Activated B cell treated with CpG ODN at 0.5 μM for 24 hours (primary cell): ENCODE measurements at regions of chr6 and their contacts with region 1.

Region 1: DNA sequence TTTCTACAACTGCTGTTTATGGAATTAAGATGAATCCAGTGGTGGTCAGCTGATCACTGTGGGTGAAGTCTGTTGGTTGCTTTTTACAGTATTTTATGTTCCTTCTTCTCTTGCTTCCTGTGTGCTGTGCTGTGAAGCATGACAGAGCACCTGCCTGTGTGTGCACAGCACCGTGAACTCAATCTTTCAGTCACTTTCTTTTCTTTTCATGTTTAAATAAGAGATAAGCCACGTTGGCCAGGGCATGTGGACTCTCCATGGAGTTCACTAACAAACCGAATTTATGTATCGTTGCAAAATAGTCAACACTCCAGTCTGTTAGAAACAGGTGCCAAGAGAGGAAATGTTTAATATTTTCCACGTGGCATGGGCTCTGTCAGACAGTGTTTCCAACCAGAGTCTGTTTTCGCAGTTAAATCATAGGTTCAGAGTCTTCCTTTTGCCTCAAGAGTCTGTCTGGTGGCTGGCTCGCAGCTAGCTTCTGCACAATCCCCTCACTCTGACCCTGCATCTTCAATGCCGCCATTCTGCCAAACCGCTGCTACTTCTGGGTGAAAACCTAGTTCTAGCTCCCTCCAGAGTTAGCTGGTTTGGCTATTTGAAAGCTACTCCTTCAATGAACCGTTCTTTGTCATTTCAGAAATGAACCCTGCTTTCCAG is 73.2 kb downstream of the QRSL1 start:
- DNase-seq: peak; percentile 30
- ATAC-seq: peak; percentile 92
- H3K4me3 Mint-ChIP-seq: peak overlapping the region; percentile 81
- H3K27ac Mint-ChIP-seq: peak overlapping the region; percentile 98
- H3K4me1 Mint-ChIP-seq: peaks cover 91% of the 10 kb centered on the region
- H3K27me3 Mint-ChIP-seq: no peaks in the 10 kb centered on the region
- CTCF ChIP-seq: no peak

Region 2: DNA sequence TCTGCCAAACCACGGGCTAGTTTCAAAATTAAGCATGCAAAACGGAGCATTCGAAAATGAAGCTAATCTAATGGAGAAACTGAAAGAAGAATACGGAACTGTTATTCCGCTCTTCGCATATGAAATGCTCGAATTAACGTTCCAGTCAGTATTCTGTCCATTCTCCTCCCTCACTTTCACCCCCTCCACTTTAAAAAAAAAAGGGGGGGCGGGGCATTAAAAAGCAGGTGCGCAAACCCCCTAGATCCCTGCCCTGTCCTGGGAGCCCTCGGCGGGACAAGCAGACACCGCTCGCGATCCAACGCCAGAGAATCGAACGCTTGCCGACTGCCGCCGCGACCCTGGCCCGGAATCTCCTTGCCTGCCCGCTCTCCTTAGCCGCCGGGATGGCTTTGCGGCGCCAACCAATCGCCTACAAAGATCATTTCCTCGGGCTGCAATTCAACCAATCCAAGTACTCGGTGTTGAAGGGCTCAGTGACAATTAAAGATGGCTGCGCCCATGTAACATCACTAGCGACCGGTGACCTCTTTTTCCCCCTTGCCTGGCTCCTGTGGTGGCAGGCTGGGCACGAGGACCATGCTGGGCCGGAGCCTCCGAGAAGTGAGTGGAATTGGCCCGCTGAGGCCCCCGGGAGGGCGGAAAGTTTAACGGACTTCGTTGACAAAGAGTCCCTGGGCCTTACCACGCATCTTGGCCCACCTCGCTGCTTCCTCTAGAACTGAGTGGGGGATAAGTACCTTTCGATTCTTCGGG is 73.3 kb before region 1 on chr6 and contains the starts of genes QRSL1 and RTN4IP1:
- CTCF ChIA-PET with region 1: interaction called, 3 read pairs
- POLR2A ChIA-PET with region 1: interaction called, 3 read pairs
- intact Hi-C with region 1: loop called (anchors 1 kb)
- DNase-seq: peak; percentile 74
- ATAC-seq: peak; percentile 84
- H3K4me3 Mint-ChIP-seq: peak within 1 kb of the TSS; percentile 93
- H3K27ac Mint-ChIP-seq: peak within 1 kb of the TSS; percentile 96
- H3K4me1 Mint-ChIP-seq: peaks cover 72% of the 10 kb centered on the region
- H3K27me3 Mint-ChIP-seq: no peaks in the 10 kb centered on the region
- CTCF ChIP-seq: no peak
- total RNA-seq, gene QRSL1: 28.4 and 31.1 TPM in 2 replicates
- total RNA-seq, gene RTN4IP1: 9.9 and 11.2 TPM in 2 replicates

Region 3: DNA sequence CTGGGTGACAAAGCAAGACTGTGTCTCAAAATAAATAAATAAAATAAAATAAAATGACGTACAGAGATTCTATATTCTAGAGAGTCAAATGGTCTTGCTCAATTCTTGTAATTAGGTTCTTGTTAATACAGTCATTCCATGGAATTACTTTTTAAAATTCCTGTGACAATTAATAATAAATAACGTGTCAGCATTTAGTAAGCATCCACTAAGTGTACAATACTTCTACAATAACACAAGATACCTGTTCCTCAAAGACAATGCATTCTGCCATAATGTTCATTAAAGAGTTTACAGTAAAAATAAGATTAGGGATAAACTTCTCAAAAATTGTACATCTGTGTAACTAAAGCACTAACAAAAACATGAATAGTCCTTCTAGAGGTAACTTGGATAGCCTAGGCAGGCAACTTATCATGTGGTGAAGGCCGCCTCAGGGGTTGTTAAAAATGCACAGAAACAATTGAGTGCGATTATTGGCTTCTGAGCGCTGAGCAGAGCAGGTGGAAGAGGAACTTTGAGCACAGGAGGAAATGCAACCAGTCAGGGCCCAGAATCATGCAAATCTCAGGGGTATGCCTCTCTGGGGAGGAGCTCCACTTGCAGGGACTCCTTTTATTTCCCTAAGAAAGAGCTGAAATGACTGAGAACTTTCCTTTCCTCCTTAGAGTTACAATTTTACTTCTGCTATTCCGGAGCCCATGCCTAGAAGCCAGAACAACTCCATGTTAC is 36.1 kb before region 1 on chr6:
- CTCF ChIA-PET with region 1: no interaction called
- POLR2A ChIA-PET with region 1: interaction called, 3 read pairs
- intact Hi-C with region 1: loop called (anchors 1 kb)
- DNase-seq: peak; percentile 49
- ATAC-seq: peak; percentile 99
- H3K4me3 Mint-ChIP-seq: peak overlapping the region; percentile 66
- H3K27ac Mint-ChIP-seq: peak overlapping the region; percentile 87
- H3K4me1 Mint-ChIP-seq: peaks cover 66% of the 10 kb centered on the region
- H3K27me3 Mint-ChIP-seq: no peaks in the 10 kb centered on the region
- CTCF ChIP-seq: no peak

Region 4: DNA sequence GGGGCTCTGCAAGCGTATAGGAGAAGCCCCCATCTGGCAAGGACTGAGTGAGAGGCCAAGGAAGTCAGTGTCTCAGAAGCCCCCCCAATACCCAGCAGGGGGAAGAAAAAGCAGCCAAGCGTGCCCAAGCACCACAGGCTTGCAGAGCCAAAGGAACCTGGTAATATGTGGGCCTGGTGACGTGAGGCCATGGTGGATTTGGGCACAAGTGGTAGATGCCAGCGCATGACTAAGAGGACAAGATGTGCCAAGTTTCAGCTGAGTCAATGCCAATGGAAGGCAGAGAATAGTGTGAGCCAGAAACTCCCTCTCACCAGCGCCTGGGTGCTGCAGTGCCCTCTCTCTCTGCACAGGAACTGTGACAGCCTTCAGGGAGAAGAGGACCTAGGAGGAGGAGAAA is 36.8 kb after region 1 on chr6:
- CTCF ChIA-PET with region 1: no interaction called
- POLR2A ChIA-PET with region 1: no interaction called
- intact Hi-C with region 1: loop called (anchors 5 kb)
- DNase-seq: no peak
- ATAC-seq: peak; percentile 50
- H3K4me3 Mint-ChIP-seq: no peak overlapping the region
- H3K27ac Mint-ChIP-seq: peak overlapping the region; percentile 73
- H3K4me1 Mint-ChIP-seq: peaks cover 51% of the 10 kb centered on the region
- H3K27me3 Mint-ChIP-seq: no peaks in the 10 kb centered on the region
- CTCF ChIP-seq: no peak

Region 5: GRCh38 chr6:106894978-106895702 is 192.6 kb after region 1 on chr6:
- CTCF ChIA-PET with region 1: no interaction called
- POLR2A ChIA-PET with region 1: no interaction called
- intact Hi-C with region 1: no loop called
- DNase-seq: no peak
- ATAC-seq: no peak
- H3K4me3 Mint-ChIP-seq: no peak overlapping the region
- H3K27ac Mint-ChIP-seq: no peak overlapping the region
- H3K4me1 Mint-ChIP-seq: no peaks in the 10 kb centered on the region
- H3K27me3 Mint-ChIP-seq: no peaks in the 10 kb centered on the region
- CTCF ChIP-seq: no peak

Region 6: DNA sequence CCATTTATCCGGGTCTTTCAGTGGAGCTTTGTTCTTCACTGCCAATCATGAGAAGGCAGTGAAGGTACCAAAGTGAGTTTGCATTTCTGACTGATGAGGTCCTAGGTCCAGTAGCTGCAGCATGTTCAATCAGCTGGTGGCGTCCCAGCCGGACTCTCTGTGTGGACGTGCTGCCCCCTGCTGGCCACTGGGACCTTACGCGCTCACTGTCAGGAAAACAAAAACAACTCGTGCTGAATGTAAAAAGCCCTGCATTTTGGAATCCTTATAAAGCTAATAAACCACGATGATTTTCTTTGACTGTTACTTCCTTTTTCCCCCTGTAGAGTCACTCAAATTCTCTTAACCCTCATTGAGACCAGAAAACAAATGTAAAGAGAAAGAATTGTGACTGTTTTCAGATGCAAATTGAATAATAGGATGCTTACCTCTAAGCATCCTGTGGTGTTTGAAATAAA is 276.9 kb after region 1 on chr6:
- CTCF ChIA-PET with region 1: interaction called, 4 read pairs
- POLR2A ChIA-PET with region 1: interaction called, 3 read pairs
- intact Hi-C with region 1: loop called (anchors 1 kb)
- DNase-seq: peak; percentile 79
- ATAC-seq: peak; percentile 32
- H3K4me3 Mint-ChIP-seq: no peak overlapping the region
- H3K27ac Mint-ChIP-seq: no peak overlapping the region
- H3K4me1 Mint-ChIP-seq: peaks cover 19% of the 10 kb centered on the region
- H3K27me3 Mint-ChIP-seq: no peaks in the 10 kb centered on the region
- CTCF ChIP-seq: peak; percentile 28

Region 7: GRCh38 chr6:106997390-106998158 is 295.0 kb after region 1 on chr6:
- CTCF ChIA-PET with region 1: no interaction called
- POLR2A ChIA-PET with region 1: no interaction called
- intact Hi-C with region 1: no loop called
- DNase-seq: peak; percentile 34
- ATAC-seq: peak; percentile 73
- H3K4me3 Mint-ChIP-seq: no peak overlapping the region
- H3K27ac Mint-ChIP-seq: no peak overlapping the region
- H3K4me1 Mint-ChIP-seq: peaks cover 2% of the 10 kb centered on the region
- H3K27me3 Mint-ChIP-seq: no peaks in the 10 kb centered on the region
- CTCF ChIP-seq: peak; percentile 31